Caco-2 (cell line): ENCODE measurements at regions of chr12 and their contacts with region 1.

Region 1: GRCh38 chr12:92928962-92929915 is at the start of gene EEA1:
- DNase-seq: peak; percentile 97 to 98
- H3K4me3 ChIP-seq: peak within 1 kb of the TSS; percentile 88
- H3K4me3 Mint-ChIP-seq: peak within 1 kb of the TSS; percentile 90
- H3K27ac Mint-ChIP-seq: peak within 1 kb of the TSS; percentile 93
- H3K4me1 ChIP-seq: peaks cover 54% of the 10 kb centered on the region
- H3K4me1 Mint-ChIP-seq: peaks cover 50% of the 10 kb centered on the region
- H3K27me3 ChIP-seq: no peaks in the 10 kb centered on the region
- H3K27me3 Mint-ChIP-seq: no peaks in the 10 kb centered on the region
- CTCF ChIP-seq: peak in 1 of 2 experiments; percentile 12
- total RNA-seq, gene EEA1: 68.9 TPM in 2 replicates

Region 2: DNA sequence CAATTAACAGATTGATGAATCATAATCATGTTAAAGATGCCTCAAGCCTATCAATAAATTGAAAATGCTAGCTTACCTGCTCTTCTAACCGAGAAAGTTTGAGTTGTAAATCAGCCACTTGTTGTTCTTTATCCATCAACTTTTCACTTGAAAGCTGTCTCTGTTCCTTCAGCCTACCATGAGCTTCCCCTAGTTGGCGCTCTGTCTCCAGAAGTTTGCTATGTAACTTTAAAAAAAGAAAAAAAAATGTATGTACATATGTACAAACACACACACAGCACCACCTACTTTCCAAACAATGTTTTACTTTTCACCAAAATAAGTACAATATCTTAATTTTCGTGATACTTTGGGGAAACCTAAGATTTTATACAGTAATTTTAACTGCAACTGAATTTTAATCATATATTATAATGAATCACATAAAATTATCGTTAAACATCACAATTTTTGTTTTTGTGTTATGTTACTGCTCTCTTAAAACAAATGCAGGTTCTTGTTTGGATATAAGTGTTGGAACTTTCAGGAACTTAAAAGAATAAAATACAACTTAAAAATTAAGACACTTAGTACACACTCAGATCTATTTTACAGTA is 101.3 kb before region 1 on chr12:
- CTCF ChIA-PET with region 1: interaction called, 14 read pairs
- POLR2A ChIA-PET with region 1: no interaction called
- intact Hi-C with region 1: loop called (anchors 1 kb)
- DNase-seq: peak; percentile 46 to 61
- H3K4me3 ChIP-seq: no peak overlapping the region
- H3K4me3 Mint-ChIP-seq: no peak overlapping the region
- H3K27ac Mint-ChIP-seq: no peak overlapping the region
- H3K4me1 ChIP-seq: no peaks in the 10 kb centered on the region; the same call in 1 of the 2 replicates
- H3K4me1 Mint-ChIP-seq: no peaks in the 10 kb centered on the region
- H3K27me3 ChIP-seq: no peaks in the 10 kb centered on the region
- H3K27me3 Mint-ChIP-seq: no peaks in the 10 kb centered on the region
- CTCF ChIP-seq: peak; percentile 54 to 94